ENCODE measurements at regions of chr11 and their contacts with region 1.

Region 1: DNA sequence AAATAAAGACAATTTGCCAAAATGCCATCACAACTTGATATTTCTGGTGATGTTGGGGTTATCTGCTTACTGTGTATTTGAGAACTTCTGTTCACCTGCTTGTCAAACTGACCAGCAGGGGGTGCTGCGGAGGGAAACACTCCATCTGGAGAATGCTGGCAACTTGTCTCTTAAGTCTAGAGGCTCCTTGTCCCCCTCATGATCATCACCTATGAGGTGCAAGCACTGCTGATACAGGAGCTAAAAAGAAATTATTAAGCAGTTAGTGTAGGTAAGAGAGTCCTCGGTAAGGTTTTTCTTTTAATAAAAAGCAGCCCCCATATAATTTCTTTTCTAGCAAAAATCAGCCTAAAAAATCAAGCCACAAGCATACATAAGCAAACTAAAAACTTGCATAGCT is 32.7 kb upstream of the GLYATL1B start:
- DNase-seq: peak; percentile 25 to 89
- H3K4me3 ChIP-seq: no peak overlapping the region
- H3K27ac ChIP-seq: no peak overlapping the region
- H3K4me1 ChIP-seq: peaks cover 0 to 4% (median 2%) of the 10 kb centered on the region in 4 experiments; a peak in 4 of 7 replicates
- H3K27me3 ChIP-seq: no peaks in the 10 kb centered on the region
- CTCF ChIP-seq: peak; percentile 50 to 68 (median 60)
- EP300 ChIP-seq: no peak
- POLR2A ChIP-seq: no peak
- RAD21 ChIP-seq: peak; percentile 25 to 46; a peak in 3 of 4 replicates

Region 2: DNA sequence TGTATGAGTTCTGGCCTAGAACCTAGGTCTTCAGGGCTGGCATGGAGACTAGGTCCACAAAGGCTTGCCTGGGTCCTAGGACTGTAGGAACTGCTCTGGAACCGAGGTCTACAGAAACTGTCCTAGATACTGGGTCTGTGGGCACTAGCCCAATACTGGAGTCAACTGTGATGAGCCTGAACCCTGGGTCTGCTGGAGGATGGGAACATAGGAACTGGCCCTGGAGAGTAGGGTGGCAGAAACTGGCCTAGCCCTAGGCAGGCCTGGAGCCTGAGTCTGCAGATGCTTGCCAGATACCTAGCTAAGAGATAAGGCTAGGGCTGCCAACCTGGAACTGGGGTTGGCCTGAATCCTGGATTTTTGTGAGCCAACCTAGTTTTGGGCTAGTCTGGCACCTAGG is 189.7 kb before region 1 on chr11:
- CTCF ChIA-PET with region 1: no interaction called
- POLR2A ChIA-PET with region 1: no interaction called
- DNase-seq: no peak
- H3K4me3 ChIP-seq: no peak overlapping the region
- H3K27ac ChIP-seq: no peak overlapping the region
- H3K4me1 ChIP-seq: no peaks in the 10 kb centered on the region
- H3K27me3 ChIP-seq: no peaks in the 10 kb centered on the region
- CTCF ChIP-seq: no peak
- EP300 ChIP-seq: no peak
- POLR2A ChIP-seq: no peak
- RAD21 ChIP-seq: no peak

Region 3: GRCh38 chr11:58905721-58906477 is 147.5 kb before region 1 on chr11:
- CTCF ChIA-PET with region 1: interaction called, 20 read pairs
- POLR2A ChIA-PET with region 1: no interaction called
- DNase-seq: peak; percentile 62 to 86
- H3K4me3 ChIP-seq: peak overlapping the region; percentile 75 to 93 (median 76)
- H3K27ac ChIP-seq: no peak overlapping the region
- H3K4me1 ChIP-seq: peaks cover 0 to 5% (median 2%) of the 10 kb centered on the region in 4 experiments; a peak in 4 of 7 replicates
- H3K27me3 ChIP-seq: peaks cover 4 to 12% (median 10%) of the 10 kb centered on the region in 4 experiments; a peak in 6 of 7 replicates
- CTCF ChIP-seq: peak; percentile 43 to 57 (median 50)
- EP300 ChIP-seq: no peak
- POLR2A ChIP-seq: peak in 1 of 2 experiments; percentile 64; a peak in 1 of 3 replicates
- RAD21 ChIP-seq: peak; percentile 16 to 32; a peak in 2 of 4 replicates

Region 4: DNA sequence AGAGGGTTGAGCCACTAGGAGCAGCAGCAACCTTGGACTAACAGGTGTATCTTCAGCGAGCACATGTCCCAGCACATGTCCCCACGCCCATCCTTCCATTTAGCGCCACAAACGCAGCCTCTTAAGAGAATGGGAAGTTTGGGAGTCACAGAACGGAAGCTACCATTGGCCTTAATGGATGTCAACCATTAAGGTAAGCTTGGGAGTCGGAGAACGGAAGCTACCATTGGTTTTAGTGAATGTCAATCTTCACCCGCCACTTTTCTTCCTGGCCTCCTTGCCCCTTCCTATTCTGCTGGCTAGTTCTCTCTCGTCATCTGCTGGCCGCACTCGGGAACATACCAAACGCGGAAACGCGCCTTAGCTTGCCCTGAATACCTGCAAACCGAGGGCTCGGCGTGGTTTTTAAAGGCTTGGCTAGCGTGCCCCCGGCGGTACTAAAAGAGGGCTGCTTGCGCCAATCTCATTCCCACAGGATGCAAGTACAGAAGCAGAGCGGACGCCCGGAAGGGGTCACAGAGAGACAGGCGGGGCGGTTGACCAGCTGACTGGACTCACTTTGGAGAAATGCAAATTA is 89.8 kb before region 1 on chr11:
- CTCF ChIA-PET with region 1: interaction called, 10 read pairs
- POLR2A ChIA-PET with region 1: interaction called, 3 read pairs
- DNase-seq: peak; percentile 70 to 80
- H3K4me3 ChIP-seq: peak overlapping the region; percentile 26 to 56 (median 37); a peak in 5 of 8 replicates
- H3K27ac ChIP-seq: no peak overlapping the region
- H3K4me1 ChIP-seq: peaks cover 0 to 2% (median 0%) of the 10 kb centered on the region in 4 experiments; a peak in 1 of 7 replicates
- H3K27me3 ChIP-seq: peaks cover 0 to 16% (median 13%) of the 10 kb centered on the region in 4 experiments; a peak in 6 of 7 replicates
- CTCF ChIP-seq: peak; percentile 46 to 62 (median 53); a peak in 3 of 4 replicates
- EP300 ChIP-seq: no peak
- POLR2A ChIP-seq: peak in 1 of 2 experiments; percentile 50; a peak in 1 of 3 replicates
- RAD21 ChIP-seq: peak; percentile 62 to 66

Region 5: DNA sequence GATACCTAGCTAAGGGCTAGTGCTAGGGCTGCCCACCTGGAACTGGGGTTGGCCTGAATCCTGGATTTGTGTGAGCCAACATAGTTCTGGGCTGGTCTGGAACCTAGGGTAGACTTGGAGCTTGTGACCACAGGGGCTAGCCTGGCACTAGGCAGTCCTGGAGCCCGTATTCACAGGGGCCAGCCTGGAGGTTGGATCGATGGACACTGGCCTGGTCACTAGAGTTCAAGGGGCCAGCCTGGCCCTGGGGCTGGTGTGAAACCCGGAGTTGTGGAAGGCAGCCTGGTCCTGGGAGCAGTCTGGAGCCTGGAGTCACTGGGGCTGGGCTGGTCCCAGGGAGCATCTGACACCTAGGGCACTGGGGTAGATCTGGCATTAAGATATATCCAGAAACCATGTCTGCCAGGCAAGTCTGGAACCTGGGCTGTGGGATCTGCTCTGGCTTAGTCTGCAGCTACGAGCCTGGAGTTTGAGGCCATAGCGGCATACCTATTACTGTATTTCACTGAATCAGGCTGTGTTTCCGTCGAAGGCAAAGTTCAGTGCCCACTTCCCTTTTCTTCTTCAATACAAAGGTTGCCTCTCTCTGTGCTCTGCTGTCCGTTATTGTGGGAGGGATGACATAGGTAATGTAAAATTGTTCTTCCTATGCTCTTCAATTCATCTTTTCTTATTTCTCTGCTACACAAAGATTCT is 23.6 kb after region 1 on chr11:
- CTCF ChIA-PET with region 1: interaction called, 10 read pairs
- POLR2A ChIA-PET with region 1: no interaction called
- DNase-seq: no peak
- H3K4me3 ChIP-seq: no peak overlapping the region
- H3K27ac ChIP-seq: no peak overlapping the region
- H3K4me1 ChIP-seq: no peaks in the 10 kb centered on the region
- H3K27me3 ChIP-seq: no peaks in the 10 kb centered on the region
- CTCF ChIP-seq: no peak
- EP300 ChIP-seq: no peak
- POLR2A ChIP-seq: no peak
- RAD21 ChIP-seq: no peak

Region 6: GRCh38 chr11:59088162-59088561 is 34.8 kb after region 1 on chr11:
- CTCF ChIA-PET with region 1: no interaction called
- POLR2A ChIA-PET with region 1: no interaction called
- DNase-seq: no peak
- H3K4me3 ChIP-seq: no peak overlapping the region
- H3K27ac ChIP-seq: no peak overlapping the region
- H3K4me1 ChIP-seq: 0 out of 7 replicates have a peak, but pooled peaks cover 0 to 1% (median 0%) of the 10 kb centered on the region in 4 experiments
- H3K27me3 ChIP-seq: no peaks in the 10 kb centered on the region
- CTCF ChIP-seq: no peak
- EP300 ChIP-seq: no peak
- POLR2A ChIP-seq: no peak
- RAD21 ChIP-seq: no peak

Region 7: GRCh38 chr11:59158206-59159068 is 105.0 kb after region 1 on chr11:
- CTCF ChIA-PET with region 1: interaction called, 12 read pairs
- POLR2A ChIA-PET with region 1: no interaction called
- DNase-seq: peak in 1 of 2 experiments; percentile 67
- H3K4me3 ChIP-seq: no peak overlapping the region
- H3K27ac ChIP-seq: no peak overlapping the region; the same call in 1 of the 2 replicates
- H3K4me1 ChIP-seq: peaks cover 0 to 4% (median 0%) of the 10 kb centered on the region in 4 experiments; a peak in 2 of 7 replicates
- H3K27me3 ChIP-seq: no peaks in the 10 kb centered on the region
- CTCF ChIP-seq: peak; percentile 29 to 87 (median 80)
- EP300 ChIP-seq: no peak
- POLR2A ChIP-seq: no peak
- RAD21 ChIP-seq: peak; percentile 91 to 92

Region 8: GRCh38 chr11:59197991-59198390 is 144.6 kb after region 1 on chr11:
- CTCF ChIA-PET with region 1: no interaction called
- POLR2A ChIA-PET with region 1: no interaction called
- DNase-seq: no peak
- H3K4me3 ChIP-seq: no peak overlapping the region
- H3K27ac ChIP-seq: no peak overlapping the region
- H3K4me1 ChIP-seq: no peaks in the 10 kb centered on the region; a peak in 1 of 7 replicates
- H3K27me3 ChIP-seq: no peaks in the 10 kb centered on the region
- CTCF ChIP-seq: no peak
- EP300 ChIP-seq: no peak
- POLR2A ChIP-seq: no peak
- RAD21 ChIP-seq: no peak

Region 9: DNA sequence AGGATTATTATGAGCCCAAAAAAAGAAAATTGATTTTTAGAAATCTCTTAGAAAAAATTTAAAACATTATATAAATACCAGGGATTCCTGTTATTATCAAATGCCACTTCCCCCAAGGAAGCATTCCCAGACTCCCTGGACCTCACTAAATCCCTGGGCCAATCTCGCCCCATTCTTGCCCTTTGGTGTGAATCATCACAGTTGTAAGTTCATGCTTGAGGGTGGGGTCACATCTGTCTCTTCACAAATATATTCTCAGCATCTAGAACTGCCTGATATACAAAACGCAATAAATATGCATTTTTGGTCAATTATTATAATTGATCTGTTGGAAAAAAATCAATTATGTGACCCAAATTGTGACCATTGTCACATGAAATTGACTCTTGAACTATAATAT is 395.1 kb after region 1 on chr11:
- CTCF ChIA-PET with region 1: no interaction called
- POLR2A ChIA-PET with region 1: no interaction called
- DNase-seq: no peak
- H3K4me3 ChIP-seq: no peak overlapping the region
- H3K27ac ChIP-seq: no peak overlapping the region
- H3K4me1 ChIP-seq: no peaks in the 10 kb centered on the region
- H3K27me3 ChIP-seq: no peaks in the 10 kb centered on the region; a peak in 1 of 7 replicates
- CTCF ChIP-seq: no peak
- EP300 ChIP-seq: no peak
- POLR2A ChIP-seq: no peak
- RAD21 ChIP-seq: no peak

Measured in H1 (cell line).